ENCODE measurements at regions of chr4 and their contacts with region 1.

Region 1: DNA sequence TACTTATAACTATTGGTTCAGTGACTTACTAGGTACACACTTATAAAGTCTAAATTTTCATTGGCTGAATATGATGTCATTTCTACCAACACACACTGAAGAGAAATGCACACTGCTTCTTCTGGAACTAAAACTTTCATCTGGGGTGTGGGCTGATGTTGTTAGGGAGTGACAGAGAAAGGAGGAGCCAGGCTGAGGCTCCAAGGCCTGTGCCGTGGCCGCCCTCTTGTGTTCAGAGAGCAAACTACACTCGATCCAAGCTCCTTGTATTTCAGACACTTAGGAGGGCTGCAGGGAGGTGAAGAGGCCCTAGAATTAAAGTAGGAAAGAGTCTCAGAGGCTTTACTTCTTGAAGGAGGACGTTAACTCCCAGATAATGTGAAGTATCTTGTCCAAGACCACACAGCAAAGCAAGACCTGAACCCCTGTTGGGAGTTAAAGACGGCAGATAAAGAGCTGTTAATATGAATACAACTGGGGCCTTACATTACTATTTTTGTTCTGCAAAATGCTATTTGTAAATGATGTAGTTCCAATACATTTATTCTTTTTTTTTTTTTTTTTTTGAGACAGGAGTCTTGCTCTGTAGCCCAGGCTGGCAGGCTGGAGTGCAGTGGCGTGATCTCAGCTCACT is 137.5 kb downstream of the AFAP1 start:
- DNase-seq: peak; percentile 75
- H3K4me3 ChIP-seq: no peak overlapping the region
- H3K27ac ChIP-seq: no peak overlapping the region
- H3K4me1 ChIP-seq: peaks cover 34% of the 10 kb centered on the region
- H3K27me3 ChIP-seq: no peaks in the 10 kb centered on the region
- CTCF ChIP-seq: peak; percentile 94

Region 2: DNA sequence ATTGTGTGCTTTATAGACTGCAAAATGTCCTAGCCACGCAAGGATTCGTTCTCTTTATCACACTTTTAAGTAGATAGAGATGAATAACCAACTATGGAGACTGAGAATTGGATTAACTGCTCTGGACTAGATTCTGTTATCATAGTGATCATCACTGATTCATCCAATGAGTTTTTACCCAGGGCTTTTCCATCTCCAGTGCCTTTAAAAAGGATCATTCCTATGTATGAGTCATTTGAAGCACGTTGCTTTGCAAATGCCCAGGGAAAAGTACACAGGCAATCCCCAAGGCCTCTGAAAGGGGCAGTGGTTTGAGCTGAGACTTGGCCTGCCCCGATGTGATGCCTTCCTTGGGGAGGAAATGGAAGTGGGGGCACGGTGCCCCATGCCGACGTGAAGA is 244.8 kb before region 1 on chr4:
- intact Hi-C with region 1: no loop called
- DNase-seq: no peak
- H3K4me3 ChIP-seq: no peak overlapping the region
- H3K27ac ChIP-seq: no peak overlapping the region
- H3K4me1 ChIP-seq: no peaks in the 10 kb centered on the region
- H3K27me3 ChIP-seq: peaks cover 4% of the 10 kb centered on the region
- CTCF ChIP-seq: no peak

Region 3: DNA sequence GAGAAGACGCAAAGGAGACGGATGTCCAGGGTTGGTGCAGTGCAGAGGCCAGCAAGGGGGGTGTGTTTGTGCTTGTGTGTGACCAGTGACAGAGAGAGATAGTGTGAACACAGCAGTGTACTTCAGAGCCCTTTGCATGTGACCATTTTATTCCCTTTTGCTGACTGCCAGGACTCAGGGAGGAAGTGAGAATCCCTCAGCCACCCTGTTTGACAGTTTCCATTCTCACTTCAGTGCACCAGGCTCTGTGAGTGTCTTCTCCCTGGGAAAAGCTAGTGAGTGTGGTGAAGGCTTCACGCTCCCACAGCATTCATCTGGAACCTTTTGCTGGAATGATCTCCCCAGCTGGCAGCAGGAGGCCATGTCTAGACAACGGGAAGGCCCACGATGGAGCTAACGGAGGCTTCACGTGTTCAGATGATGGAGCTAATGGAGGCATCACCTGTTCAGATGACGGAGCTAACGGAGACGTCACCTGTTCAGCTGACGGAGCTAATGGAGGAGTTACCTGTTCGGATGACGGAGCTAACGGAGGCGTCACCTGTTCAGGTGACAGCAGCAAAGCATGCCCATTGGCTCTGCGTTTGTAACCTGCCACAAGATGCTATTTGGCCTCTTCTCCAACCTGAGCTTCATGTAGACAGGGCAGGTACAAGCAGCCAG is 57.9 kb before region 1 on chr4:
- intact Hi-C with region 1: no loop called
- DNase-seq: no peak
- H3K4me3 ChIP-seq: no peak overlapping the region
- H3K27ac ChIP-seq: no peak overlapping the region
- H3K4me1 ChIP-seq: no peaks in the 10 kb centered on the region
- H3K27me3 ChIP-seq: peaks cover 14% of the 10 kb centered on the region
- CTCF ChIP-seq: no peak

Region 4: GRCh38 chr4:7761720-7762119 is 40.5 kb before region 1 on chr4:
- intact Hi-C with region 1: loop called (anchors 5 kb)
- DNase-seq: peak; percentile 84
- H3K4me3 ChIP-seq: no peak overlapping the region
- H3K27ac ChIP-seq: peak overlapping the region; percentile 54
- H3K4me1 ChIP-seq: peaks cover 34% of the 10 kb centered on the region
- H3K27me3 ChIP-seq: no peaks in the 10 kb centered on the region
- CTCF ChIP-seq: peak; percentile 94

Region 5: GRCh38 chr4:7892212-7893019 is 90.2 kb after region 1 on chr4:
- intact Hi-C with region 1: no loop called
- DNase-seq: no peak
- H3K4me3 ChIP-seq: no peak overlapping the region
- H3K27ac ChIP-seq: no peak overlapping the region
- H3K4me1 ChIP-seq: peaks cover 21% of the 10 kb centered on the region
- H3K27me3 ChIP-seq: no peaks in the 10 kb centered on the region
- CTCF ChIP-seq: no peak

Region 6: DNA sequence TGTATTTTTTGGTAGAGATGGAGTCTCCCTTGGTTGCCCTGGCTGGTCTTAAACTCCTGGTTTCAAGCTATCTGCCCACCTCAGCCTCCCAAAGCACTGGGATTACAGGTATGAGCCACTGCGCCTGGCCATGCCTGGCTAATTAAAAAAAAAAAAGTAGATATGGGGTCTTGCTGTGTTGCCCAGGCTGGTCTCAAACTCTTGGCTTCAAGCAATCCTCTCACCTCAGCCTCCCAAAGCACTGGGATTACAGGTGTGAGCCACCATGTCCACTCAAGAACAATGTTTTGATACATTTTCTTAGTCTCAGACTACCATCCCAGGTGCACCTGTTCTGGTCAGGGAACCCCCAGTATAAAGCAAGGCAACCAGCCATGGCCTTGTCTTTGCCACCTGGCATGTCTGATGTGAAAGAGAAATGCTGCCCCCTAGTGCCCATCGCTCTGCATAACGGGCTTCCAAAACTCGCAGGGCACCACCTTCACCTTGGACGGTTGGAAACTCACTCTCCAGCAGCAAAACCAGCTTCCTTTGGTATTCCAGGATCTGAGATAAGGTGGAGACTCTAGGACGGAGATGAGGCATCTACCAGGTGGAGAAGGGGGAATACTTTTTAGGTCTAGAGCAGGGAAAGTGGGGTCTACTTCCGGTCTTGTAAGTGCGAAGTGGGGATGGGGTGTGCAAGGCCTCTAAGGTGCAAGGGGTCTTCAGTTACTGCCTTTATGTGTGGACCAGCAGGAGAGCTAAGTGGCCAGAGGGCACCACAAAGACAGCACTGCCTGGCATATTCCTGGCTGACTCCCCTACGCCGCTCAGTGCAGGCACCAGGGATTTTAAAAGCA is 185.2 kb after region 1 on chr4:
- intact Hi-C with region 1: loop called (anchors 2 kb)
- DNase-seq: peak; percentile 60
- H3K4me3 ChIP-seq: no peak overlapping the region
- H3K27ac ChIP-seq: no peak overlapping the region
- H3K4me1 ChIP-seq: peaks cover 9% of the 10 kb centered on the region
- H3K27me3 ChIP-seq: no peaks in the 10 kb centered on the region
- CTCF ChIP-seq: peak; percentile 90

Measured in left ventricle myocardium inferior (tissue), 1 donor.